ENCODE measurements at regions of chr2 and their contacts with region 1.

Region 1: GRCh38 chr2:86172610-86173009 is 22.7 kb downstream of the IMMT start:
- DNase-seq: no peak
- H3K4me3 Mint-ChIP-seq: no peak overlapping the region
- H3K27ac Mint-ChIP-seq: no peak overlapping the region
- H3K4me1 Mint-ChIP-seq: peaks cover 17% of the 10 kb centered on the region
- H3K27me3 Mint-ChIP-seq: no peaks in the 10 kb centered on the region

Region 2: GRCh38 chr2:85642725-85643124 is 529.9 kb before region 1 on chr2:
- CTCF ChIA-PET with region 1: interaction called, 10 read pairs
- intact Hi-C with region 1: no loop called
- DNase-seq: no peak
- H3K4me3 Mint-ChIP-seq: no peak overlapping the region
- H3K27ac Mint-ChIP-seq: no peak overlapping the region
- H3K4me1 Mint-ChIP-seq: no peaks in the 10 kb centered on the region
- H3K27me3 Mint-ChIP-seq: no peaks in the 10 kb centered on the region

Measured in activated naive CD4-positive, alpha-beta T cell treated with anti-CD3 and anti-CD28 coated beads for 36 hours (primary cell).